ENCODE measurements at regions of chr22 and their contacts with region 1.

Region 1: GRCh38 chr22:30079952-30080533 is at the start of gene HORMAD2:
- DNase-seq: no peak
- H3K4me3 ChIP-seq: no peak within 1 kb of the TSS
- H3K27ac ChIP-seq: no peak within 1 kb of the TSS
- H3K4me1 ChIP-seq: no peaks in the 10 kb centered on the region
- H3K27me3 ChIP-seq: no peaks in the 10 kb centered on the region
- CTCF ChIP-seq: no peak
- POLR2A ChIP-seq: no peak
- total RNA-seq, gene HORMAD2: not detected

Region 2: DNA sequence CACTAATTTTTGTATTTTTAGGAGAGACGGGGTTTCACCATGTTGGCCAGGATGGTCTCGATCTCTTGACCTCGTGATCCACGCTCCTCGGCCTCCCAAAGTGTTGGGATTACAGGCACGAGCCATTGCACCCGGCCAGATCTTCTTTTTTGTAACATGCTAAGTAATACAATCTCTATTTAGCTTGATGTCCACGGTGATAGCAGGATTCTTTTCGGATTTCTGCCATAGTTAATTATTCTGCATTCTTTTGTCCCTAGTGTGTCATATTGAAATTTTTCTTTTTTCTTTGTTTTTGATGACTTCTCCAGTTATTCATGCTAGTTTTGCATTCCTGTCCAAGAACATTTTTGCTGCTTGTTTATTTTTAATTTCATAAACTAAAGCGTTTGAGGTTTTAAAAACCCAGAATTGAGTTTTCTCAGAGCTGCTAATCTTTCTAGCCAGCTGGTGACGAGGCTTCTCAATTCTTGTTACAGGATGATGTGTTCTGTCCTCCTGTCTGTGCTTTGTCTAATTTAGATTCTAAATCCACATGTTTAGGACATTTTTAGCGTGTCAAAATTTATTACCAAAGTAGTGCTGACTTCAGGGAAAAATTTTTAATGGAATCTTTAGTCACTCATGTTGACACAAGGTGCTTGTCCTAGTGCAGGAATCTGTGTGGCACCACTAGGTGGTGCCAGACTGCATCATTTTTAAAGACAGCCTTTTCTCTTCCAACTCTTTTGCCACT is 454.8 kb before region 1 on chr22:
- intact Hi-C with region 1: loop called (anchors 10 kb)
- DNase-seq: no peak
- H3K4me3 ChIP-seq: no peak overlapping the region
- H3K27ac ChIP-seq: peak overlapping the region; percentile 8
- H3K4me1 ChIP-seq: peaks cover 45% of the 10 kb centered on the region
- H3K27me3 ChIP-seq: no peaks in the 10 kb centered on the region
- CTCF ChIP-seq: peak; percentile 43 to 74 (median 71)
- POLR2A ChIP-seq: no peak

Region 3: GRCh38 chr22:29727131-29727523 is 352.9 kb before region 1 on chr22:
- intact Hi-C with region 1: loop called (anchors 10 kb)
- DNase-seq: no peak
- H3K4me3 ChIP-seq: no peak overlapping the region
- H3K27ac ChIP-seq: no peak overlapping the region
- H3K4me1 ChIP-seq: no peaks in the 10 kb centered on the region
- H3K27me3 ChIP-seq: no peaks in the 10 kb centered on the region
- CTCF ChIP-seq: no peak
- POLR2A ChIP-seq: no peak

Measured in vagina (tissue), 2 donors.